ENCODE measurements at regions of chr6 and their contacts with region 1.

Region 1: DNA sequence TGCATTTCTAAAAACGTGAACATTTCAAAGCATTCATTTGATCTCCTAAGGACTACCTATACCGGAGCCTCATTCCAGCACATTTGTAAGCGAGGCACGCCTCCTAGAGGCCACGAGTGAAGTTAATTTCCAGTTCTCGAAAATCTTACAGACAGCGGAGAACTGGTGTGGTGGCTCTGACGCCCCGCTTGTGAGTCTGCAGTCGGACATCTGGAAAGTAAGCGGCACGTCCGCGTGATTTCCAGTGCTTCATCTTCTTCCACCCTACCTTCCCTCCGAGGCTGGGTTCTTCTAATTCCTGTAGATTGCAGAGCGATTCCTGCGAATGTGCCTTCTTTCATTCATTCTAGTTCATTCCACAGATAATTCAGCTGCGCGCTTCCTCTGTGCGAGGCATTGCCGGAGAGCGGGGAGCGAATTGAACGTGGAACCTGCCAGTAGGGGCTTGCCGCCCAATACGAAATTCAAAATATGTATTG is 810 bp upstream of the PRIM2 start:
- DNase-seq: peak; percentile 69 to 97 (median 84)

Region 2: DNA sequence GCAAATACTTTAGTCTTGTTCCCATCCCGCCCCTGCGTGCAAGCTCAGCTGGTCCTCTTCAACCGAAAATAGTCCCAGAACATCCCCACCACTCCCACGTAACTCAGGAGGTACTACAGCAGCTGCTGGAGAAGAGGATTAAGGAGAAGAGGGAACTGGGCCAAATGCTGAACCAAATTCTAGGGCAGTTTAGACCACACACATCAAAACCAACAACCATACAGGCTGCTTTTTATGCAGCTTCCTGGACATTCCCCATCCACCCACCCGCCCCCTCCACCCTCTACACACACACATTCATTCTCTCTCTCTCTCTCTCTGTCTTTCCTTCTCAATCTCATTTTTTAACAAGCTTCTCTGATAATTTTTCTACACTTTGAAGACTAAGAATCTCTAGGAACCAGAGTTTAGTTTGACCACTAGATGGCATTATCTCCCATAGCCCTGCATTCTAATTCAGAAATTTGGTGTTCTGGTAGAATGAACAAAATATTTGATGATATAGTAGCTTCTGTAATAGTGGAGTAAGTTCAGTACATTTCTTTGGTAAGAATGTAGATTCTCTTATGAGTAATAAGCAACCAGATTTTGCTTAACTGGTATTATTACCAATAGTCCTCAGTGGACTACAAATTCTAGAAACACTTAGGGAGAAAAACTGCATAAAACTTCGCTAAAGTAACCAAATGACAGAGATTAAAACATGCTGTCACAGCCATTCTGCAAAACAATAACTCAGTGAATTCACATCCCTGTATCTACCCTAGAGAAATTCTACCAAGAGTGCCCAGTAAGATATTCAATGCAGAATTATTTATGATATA is 413.8 kb before region 1 on chr6:
- intact Hi-C with region 1: loop called (anchors 1 kb)
- DNase-seq: peak in 8 of 10 donors; percentile 21 to 91 (median 54)

Region 3: DNA sequence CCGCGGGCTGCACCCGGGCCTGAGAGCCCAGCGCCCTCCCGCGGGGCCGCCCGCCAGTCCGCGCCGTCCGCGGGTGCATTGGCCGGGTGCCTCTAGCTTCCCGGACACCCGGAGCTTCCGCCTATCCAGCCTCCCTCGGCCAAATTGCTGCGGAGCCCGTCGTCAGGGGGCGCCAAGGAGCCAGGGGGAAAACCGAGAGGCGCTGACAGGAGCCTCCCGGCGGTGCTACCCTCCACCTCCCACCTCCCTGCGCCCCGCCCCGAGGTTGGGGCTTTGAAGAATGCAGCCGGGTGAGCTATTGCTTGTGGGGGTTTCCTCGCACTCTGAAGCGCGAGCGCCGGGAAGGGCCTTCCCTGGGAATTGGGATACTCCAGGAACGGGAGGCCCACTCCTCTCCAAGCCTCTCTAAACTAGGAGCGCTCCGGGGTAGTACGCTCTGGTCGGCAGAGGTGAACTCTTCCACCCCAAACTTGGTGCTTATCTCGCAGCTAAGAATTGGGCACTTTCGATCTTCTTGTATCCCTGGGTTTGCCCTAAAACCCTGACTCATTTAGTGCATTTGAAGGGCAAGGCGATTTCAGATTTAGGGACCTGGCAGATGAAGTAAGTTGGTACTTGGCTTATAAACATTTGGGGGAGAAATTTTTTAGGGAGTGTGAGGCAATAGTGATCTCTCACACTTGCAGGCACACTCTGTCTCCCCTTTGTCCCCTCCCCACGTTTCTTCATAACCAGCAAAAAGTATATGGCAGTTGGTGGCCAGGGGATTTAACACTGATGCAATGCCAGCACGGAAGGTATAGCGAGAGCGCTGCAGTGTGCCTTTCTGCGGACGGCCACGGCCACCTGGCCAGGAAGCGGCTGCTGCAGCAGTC is 361.2 kb before region 1 on chr6:
- intact Hi-C with region 1: loop called (anchors 2 kb)
- DNase-seq: peak in 9 of 10 donors; percentile 50 to 94 (median 85)

Region 4: DNA sequence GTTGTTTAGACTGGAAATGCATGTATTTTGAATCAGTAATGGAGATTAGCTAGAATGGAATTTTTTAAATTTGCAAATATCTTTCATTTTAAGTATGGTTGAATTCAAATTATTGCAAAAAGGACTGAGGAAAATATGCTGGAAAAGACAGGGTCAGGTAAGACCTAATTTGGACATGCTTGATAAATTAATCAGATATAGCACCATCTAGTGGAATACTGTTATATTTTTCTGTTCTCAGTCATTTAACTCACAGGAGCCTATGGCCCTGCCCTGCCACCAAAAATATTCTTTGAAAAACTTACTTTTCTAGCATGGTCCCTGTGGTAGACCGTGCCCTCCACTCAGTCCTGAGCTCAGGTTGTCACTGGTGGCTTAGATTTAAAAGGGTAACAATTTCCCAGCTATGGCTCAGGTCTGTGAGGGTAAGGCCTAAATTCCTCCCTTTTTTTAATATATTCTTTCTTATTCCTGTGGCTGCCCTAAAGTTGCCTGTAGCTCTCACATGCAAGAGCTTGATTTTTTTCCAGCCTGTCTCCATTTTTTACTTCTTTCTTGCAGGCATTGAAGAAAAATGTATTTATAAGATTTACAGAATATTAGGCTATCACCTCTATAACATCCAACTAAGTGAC is 295.4 kb before region 1 on chr6:
- intact Hi-C with region 1: no loop called
- DNase-seq: no peak

Region 5: GRCh38 chr6:57048577-57048976 is 268.0 kb before region 1 on chr6:
- intact Hi-C with region 1: loop called (anchors 2 kb)
- DNase-seq: no peak

Region 6: GRCh38 chr6:57089687-57090460 is 226.7 kb before region 1 on chr6 and contains the start of gene ZNF451:
- intact Hi-C with region 1: loop called (anchors 5 kb)
- DNase-seq: peak; percentile 97 to 100 (median 98)

Region 7: GRCh38 chr6:57190140-57190539 is 126.5 kb before region 1 on chr6:
- intact Hi-C with region 1: loop called (anchors 10 kb)
- DNase-seq: no peak

Region 8: GRCh38 chr6:57221936-57222742 is 94.5 kb before region 1 on chr6 and contains the start of gene RAB23:
- intact Hi-C with region 1: loop called (anchors 1 kb)
- DNase-seq: peak; percentile 69 to 98 (median 81)

Measured in posterior cingulate gyrus (tissue), 11 donors.